Activated CD4-positive, alpha-beta T cell treated with anti-CD3 and anti-CD28 coated beads, Interleukin-2, amount 10 ng/mL, durations not matched to agents 24 days and 14 days (primary cell): ENCODE measurements at regions of chr6 and their contacts with region 1.

Region 1: DNA sequence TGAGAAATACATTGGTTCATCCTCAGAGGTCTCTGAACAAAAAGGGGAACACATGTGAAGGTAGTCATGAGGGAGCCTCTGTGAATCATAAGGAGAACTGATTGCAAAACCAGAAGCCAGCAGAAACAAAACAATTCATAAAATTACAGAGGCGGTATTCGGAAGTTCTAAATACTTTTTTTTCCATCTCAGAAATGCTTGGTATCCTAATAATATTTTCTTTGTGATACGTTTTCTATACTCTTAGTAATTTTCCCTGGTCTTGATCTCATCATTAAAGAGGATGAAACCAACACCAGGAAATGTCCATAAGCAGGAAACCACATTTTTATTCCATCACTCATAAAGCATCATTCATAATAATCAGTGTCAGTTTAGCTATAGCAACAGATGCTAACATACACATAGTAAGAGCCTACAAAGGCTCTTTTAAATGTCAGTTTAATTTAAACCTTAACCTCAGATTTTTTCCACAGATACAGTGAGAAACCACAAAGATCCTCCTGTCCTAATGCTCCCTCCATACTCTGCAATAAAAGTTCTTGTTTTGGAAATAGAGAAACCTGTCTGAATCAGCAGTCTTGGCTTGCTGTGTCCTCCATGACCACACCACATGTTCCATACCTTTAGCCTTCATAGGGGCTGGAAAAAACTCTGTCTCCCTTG is 29.2 kb downstream of the SGK1 start:
- DNase-seq: peak; percentile 75
- H3K4me3 Mint-ChIP-seq: peak overlapping the region; percentile 74
- H3K27ac Mint-ChIP-seq: peak overlapping the region; percentile 96
- H3K4me1 Mint-ChIP-seq: peaks cover 20% of the 10 kb centered on the region
- H3K27me3 Mint-ChIP-seq: no peaks in the 10 kb centered on the region

Region 2: DNA sequence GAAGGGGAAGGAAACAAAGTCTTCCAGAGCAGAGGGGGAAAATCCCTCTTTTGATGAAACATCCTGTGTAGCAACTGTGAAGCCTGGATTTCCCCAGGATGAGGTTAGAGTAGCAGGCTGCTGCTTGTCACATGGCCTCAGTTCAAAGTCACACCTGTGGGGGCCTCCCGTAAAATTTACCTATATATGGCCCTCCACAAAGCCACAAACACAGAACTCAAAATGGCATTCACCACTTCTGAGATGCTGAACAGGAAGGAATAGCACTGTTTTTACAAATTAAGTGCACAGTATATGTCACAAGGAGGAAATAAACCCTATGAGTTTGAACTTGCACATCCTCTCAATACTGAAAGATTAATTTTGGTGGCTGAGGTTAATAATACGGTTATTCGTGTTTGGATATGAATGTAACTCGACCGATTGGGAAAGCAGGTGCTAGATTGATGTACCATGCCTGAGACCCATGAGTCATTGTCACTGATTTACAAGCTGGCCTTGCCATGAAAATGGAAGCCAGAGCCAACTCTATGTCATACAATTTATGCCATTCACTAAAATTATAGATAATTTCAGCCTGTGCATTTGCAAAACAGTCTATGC is 41.3 kb before region 1 on chr6:
- intact Hi-C with region 1: loop called (anchors 1 kb)
- DNase-seq: peak; percentile 94
- H3K4me3 Mint-ChIP-seq: peak overlapping the region; percentile 54
- H3K27ac Mint-ChIP-seq: peak overlapping the region; percentile 93
- H3K4me1 Mint-ChIP-seq: peaks cover 48% of the 10 kb centered on the region
- H3K27me3 Mint-ChIP-seq: no peaks in the 10 kb centered on the region

Region 3: GRCh38 chr6:134303903-134304302 is 15.2 kb after region 1 on chr6:
- intact Hi-C with region 1: no loop called
- DNase-seq: no peak
- H3K4me3 Mint-ChIP-seq: no peak overlapping the region
- H3K27ac Mint-ChIP-seq: no peak overlapping the region
- H3K4me1 Mint-ChIP-seq: peaks cover 12% of the 10 kb centered on the region
- H3K27me3 Mint-ChIP-seq: no peaks in the 10 kb centered on the region

Region 4: DNA sequence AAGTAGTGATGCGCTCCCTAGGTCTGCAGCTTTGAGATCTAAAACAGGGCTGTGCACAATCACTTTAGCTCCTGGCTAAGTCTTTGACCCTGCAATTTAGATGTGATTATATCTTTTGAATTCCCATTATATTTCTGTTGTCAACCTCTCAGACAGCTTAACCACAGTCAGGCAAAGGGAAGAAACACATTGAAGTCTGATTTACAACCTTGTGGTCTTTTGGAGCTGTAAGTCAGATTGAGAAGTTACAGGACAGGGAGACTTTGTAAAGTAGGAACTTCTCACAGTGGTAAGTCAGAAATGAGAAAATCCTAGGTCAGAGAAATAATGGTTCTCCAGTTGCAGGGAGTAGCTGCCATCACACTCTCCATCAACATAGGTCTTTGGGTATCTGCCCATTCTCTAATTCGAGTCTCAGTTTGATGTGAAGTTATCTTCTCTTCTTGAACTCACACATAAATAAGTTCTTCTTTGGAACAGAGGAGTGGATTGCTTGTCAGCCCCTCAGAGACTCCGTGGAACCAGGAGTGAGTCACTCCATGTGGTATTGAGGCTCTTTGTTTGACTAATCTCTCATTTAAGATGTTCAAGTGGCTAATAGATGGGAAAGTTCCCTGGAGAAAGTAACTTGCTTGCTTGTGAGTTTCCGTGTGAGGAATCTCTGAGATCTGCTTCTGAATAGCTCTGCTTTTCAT is 64.3 kb after region 1 on chr6:
- intact Hi-C with region 1: loop called (anchors 1 kb)
- DNase-seq: no peak
- H3K4me3 Mint-ChIP-seq: peak overlapping the region; percentile 81
- H3K27ac Mint-ChIP-seq: peak overlapping the region; percentile 91
- H3K4me1 Mint-ChIP-seq: peaks cover 31% of the 10 kb centered on the region
- H3K27me3 Mint-ChIP-seq: no peaks in the 10 kb centered on the region

Region 5: DNA sequence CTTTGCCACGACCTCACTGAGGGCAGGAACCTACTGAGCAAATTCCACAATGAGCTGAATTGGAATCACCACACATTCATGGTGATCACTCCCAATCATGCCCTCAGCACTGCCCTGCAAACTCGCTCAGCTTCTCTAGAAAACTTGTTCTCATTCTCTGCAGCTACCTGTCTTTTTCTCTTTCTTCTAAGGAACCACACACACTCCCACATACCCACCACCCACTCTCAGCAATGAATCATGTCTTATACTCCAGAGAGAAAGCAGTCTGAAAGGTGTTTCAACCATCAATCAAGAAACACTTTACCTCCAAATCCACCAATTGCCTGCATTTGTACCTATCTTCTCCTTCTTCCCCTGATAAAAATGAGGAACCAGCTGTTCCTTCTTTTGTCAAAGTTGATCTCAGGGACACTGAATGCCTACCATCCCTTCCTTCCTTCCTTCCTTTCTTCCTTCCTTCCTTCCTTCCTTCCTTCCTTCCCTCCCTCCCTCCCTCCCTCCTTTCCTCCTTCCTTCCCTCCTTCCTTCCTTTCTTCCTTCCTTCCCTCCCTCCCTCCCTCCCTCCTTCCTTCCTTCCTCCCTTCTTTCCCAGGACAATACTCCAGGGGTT is 113.8 kb after region 1 on chr6:
- intact Hi-C with region 1: loop called (anchors 5 kb)
- DNase-seq: no peak
- H3K4me3 Mint-ChIP-seq: no peak overlapping the region
- H3K27ac Mint-ChIP-seq: peak overlapping the region; percentile 71
- H3K4me1 Mint-ChIP-seq: peaks cover 16% of the 10 kb centered on the region
- H3K27me3 Mint-ChIP-seq: no peaks in the 10 kb centered on the region

Region 6: GRCh38 chr6:134640975-134641429 is 352.3 kb after region 1 on chr6:
- intact Hi-C with region 1: loop called (anchors 2 kb)
- DNase-seq: peak; percentile 93
- H3K4me3 Mint-ChIP-seq: no peak overlapping the region
- H3K27ac Mint-ChIP-seq: no peak overlapping the region
- H3K4me1 Mint-ChIP-seq: peaks cover 26% of the 10 kb centered on the region
- H3K27me3 Mint-ChIP-seq: peaks cover 9% of the 10 kb centered on the region

Region 7: GRCh38 chr6:135128268-135128914 is 839.7 kb after region 1 on chr6:
- intact Hi-C with region 1: loop called (anchors 2 kb)
- DNase-seq: peak; percentile 86
- H3K4me3 Mint-ChIP-seq: peak overlapping the region; percentile 73
- H3K27ac Mint-ChIP-seq: peak overlapping the region; percentile 91
- H3K4me1 Mint-ChIP-seq: peaks cover 42% of the 10 kb centered on the region
- H3K27me3 Mint-ChIP-seq: no peaks in the 10 kb centered on the region